ENCODE measurements at regions of chr7 and their contacts with region 1.

Region 1: GRCh38 chr7:129224251-129225205 is at the start of gene AHCYL2:
- DNase-seq: peak; percentile 98
- H3K4me3 Mint-ChIP-seq: peak within 1 kb of the TSS; percentile 87
- H3K27ac Mint-ChIP-seq: peak within 1 kb of the TSS; percentile 96
- H3K4me1 Mint-ChIP-seq: peaks cover 24% of the 10 kb centered on the region
- H3K27me3 Mint-ChIP-seq: no peaks in the 10 kb centered on the region
- total RNA-seq, gene AHCYL2: 10.7 and 11.1 TPM in 2 replicates

Region 2: DNA sequence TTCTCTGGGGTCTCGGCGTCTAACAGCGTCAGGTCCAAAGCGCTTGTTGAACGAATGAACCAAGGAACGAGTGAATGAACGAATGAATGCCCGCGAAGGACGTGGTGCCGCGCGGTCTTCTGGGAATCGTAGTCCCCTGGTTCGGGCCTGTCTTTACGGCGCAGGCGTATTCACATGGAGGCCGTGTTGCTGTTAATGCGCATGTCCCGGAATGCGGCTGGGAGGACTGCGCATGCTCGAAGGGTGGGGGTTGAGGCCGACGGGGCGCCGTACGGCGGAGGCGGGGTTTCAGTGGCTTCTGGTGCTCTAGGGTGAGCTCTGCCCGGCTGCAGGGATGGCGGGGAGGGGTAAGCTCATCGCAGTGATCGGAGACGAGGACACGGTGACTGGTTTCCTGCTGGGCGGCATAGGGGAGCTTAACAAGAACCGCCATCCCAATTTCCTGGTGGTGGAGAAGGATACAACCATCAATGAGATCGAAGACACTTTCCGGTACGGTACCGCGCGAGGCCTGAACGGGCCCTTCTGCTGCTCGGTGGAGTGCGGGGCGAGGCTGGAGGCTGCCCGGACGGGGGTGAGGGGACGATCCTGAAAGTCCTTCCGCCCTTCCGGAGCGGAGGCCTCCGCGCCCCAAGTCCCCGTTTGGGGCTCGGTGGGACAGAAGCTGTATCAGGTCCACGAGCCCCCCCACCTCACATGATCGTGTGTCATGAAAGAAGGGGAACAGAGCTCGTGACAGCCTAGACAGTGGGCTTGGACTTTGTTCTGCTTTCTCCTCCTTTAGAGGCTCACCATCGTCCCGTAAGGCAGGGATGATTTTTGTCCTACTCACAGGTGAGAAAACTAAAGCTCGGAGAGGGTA is 361.7 kb before region 1 on chr7 and contains the start of gene ATP6V1F:
- intact Hi-C with region 1: loop called (anchors 1 kb)
- DNase-seq: peak; percentile 100
- H3K4me3 Mint-ChIP-seq: peak within 1 kb of the TSS; percentile 93
- H3K27ac Mint-ChIP-seq: peak within 1 kb of the TSS; percentile 96
- H3K4me1 Mint-ChIP-seq: peaks cover 24% of the 10 kb centered on the region
- H3K27me3 Mint-ChIP-seq: peaks cover 4% of the 10 kb centered on the region
- total RNA-seq, gene ATP6V1F: 127 and 132 TPM in 2 replicates

Region 3: DNA sequence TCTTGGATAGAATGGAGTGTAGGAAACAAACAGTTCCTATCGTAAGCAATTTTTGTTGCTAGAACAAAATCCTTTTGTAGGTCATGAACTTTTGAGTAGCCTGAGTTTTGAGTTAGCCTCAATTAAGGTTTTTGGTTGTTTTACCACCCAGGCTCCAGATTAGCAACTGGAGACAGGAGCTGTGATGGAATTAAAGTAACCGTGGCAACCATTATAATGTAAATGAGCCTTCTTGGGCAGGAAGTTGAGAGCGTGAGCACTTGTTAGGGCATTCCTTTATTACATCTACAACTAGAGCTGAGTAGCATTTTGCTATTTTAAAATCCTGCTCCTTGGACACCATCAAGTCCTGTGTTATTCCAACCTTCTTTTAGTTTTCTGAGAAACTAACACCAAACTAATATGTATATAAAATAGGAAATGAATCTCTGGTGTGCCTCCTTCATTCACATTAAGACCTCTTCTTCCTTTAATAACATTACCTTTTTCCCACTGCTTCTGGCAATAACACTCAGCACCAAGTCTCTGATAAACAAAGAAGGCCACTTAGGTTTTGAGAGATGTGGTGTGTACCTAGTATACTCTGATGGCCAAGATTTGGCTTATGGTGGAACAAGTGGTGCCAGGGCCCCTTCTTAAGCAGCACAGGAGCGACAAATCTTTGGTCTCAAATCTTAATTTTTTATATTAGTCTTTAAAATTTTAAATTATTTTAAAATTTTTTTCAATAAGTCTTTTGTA is 34.3 kb after region 1 on chr7:
- intact Hi-C with region 1: no loop called
- DNase-seq: no peak
- H3K4me3 Mint-ChIP-seq: no peak overlapping the region
- H3K27ac Mint-ChIP-seq: no peak overlapping the region
- H3K4me1 Mint-ChIP-seq: peaks cover 22% of the 10 kb centered on the region
- H3K27me3 Mint-ChIP-seq: no peaks in the 10 kb centered on the region

Region 4: GRCh38 chr7:129271500-129272355 is 47.2 kb after region 1 on chr7:
- intact Hi-C with region 1: loop called (anchors 1 kb)
- DNase-seq: peak; percentile 91
- H3K4me3 Mint-ChIP-seq: peak overlapping the region; percentile 53
- H3K27ac Mint-ChIP-seq: peak overlapping the region; percentile 35
- H3K4me1 Mint-ChIP-seq: peaks cover 5% of the 10 kb centered on the region
- H3K27me3 Mint-ChIP-seq: no peaks in the 10 kb centered on the region

Region 5: GRCh38 chr7:129343099-129343700 is 118.7 kb after region 1 on chr7:
- intact Hi-C with region 1: no loop called
- DNase-seq: peak; percentile 76
- H3K4me3 Mint-ChIP-seq: no peak overlapping the region
- H3K27ac Mint-ChIP-seq: no peak overlapping the region
- H3K4me1 Mint-ChIP-seq: peaks cover 37% of the 10 kb centered on the region
- H3K27me3 Mint-ChIP-seq: no peaks in the 10 kb centered on the region

Region 6: GRCh38 chr7:129728875-129729467 is 504.4 kb after region 1 on chr7:
- intact Hi-C with region 1: no loop called
- DNase-seq: no peak
- H3K4me3 Mint-ChIP-seq: no peak overlapping the region
- H3K27ac Mint-ChIP-seq: no peak overlapping the region
- H3K4me1 Mint-ChIP-seq: no peaks in the 10 kb centered on the region
- H3K27me3 Mint-ChIP-seq: no peaks in the 10 kb centered on the region